ENCODE measurements at regions of chrX and their contacts with region 1.

Region 1: DNA sequence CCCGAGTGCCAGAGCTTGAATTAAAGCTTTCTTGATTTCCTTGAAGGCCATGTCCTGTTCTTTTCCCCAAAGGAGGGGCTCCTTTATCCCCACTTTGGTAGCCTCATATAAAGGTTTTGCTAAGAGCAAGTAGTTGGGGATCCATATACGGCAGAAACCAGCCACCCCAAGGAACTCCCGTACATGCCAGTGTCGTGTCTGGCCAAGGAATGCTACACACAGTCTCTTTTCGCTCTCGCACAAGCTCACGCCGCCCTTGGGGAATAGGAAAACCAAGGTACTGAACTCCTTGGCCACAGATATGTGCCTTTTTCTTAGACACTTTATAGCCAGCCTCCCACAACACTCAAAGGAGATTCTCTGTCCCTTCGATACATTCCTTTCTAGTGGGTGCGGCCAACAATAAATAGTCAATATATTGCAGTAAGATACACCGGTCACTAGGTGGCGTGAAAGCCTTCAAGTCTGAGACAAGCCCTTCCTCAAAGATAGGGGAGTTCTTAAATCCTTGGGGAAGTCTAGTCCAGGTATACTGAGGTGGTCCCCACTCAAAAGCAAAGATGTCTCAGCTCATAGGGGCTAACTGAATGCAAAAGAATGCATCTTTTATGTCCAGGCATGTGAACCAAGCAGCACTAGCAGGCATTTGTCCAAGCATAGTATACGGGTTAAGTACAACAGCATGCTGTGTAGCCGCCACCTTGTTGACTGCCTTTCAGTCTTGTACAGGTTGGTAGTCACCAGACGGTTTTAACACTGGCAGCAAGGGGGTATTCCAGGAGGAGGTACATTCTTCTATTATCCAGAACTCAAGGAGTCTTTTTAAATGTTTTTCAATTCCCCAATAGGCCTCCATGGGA is 57.8 kb upstream of the XAGE1B start:
- DNase-seq: peak in 5 of 9 experiments; percentile 0 to 57 (median 14)
- ATAC-seq: no peak
- H3K4me3 ChIP-seq: no peak overlapping the region
- H3K4me3 Mint-ChIP-seq: no peak overlapping the region
- H3K27ac ChIP-seq: no peak overlapping the region
- H3K27ac Mint-ChIP-seq: no peak overlapping the region
- H3K4me1 ChIP-seq: no peaks in the 10 kb centered on the region
- H3K4me1 Mint-ChIP-seq: peaks cover 2% of the 10 kb centered on the region
- H3K27me3 ChIP-seq: no peaks in the 10 kb centered on the region
- H3K27me3 Mint-ChIP-seq: no peaks in the 10 kb centered on the region
- CTCF ChIP-seq: peak; percentile 36

Region 2: DNA sequence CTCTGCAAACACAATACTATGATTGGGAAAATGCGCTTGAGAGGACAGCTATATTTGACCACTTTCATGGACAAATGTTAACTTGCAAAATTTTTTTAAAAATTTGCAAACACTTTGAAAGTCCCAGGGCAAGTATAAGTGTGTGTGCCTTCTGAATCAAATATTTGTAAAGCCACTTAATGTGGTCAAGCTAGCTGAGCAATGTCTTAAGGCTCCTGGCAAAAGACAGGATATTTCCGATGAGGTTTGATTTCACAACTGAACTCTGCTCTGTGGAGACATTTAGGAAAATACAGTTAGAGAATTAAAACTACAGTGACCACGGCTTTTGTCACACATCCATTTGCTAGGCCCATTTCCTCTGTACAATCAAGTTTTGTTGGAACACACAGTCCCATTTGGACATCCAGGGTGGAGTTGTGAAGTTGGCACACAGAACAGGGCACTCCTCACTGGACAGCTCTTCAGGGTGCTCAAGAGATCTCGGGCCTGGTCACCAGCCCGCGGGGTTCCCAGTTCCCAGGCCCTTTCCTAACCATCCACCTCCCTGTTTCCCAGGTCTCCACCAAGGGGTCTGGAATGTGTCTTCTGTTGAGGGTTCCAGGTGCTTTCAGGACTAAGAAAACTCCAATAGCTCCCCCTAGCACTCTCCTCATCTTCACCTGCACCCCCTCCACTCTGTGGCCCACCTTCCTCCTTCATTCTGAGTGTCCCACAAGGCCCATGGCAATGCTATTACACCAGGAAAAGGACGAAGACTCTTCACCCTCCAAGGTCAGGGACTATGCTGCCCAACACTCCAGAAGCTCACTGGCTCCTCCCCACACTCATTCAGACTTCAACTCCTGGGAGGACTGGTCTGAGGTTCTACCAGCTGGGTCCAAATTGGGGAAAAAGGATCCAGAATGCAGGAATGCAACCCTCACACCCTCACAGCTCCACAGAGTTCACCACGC is 163.9 kb before region 1 on chrX:
- CTCF ChIA-PET with region 1: no interaction called
- POLR2A ChIA-PET with region 1: no interaction called
- intact Hi-C with region 1: no loop called
- DNase-seq: no peak
- ATAC-seq: no peak
- H3K4me3 ChIP-seq: no peak overlapping the region
- H3K4me3 Mint-ChIP-seq: no peak overlapping the region
- H3K27ac ChIP-seq: no peak overlapping the region
- H3K27ac Mint-ChIP-seq: no peak overlapping the region
- H3K4me1 ChIP-seq: no peaks in the 10 kb centered on the region
- H3K4me1 Mint-ChIP-seq: no peaks in the 10 kb centered on the region
- H3K27me3 ChIP-seq: no peaks in the 10 kb centered on the region
- H3K27me3 Mint-ChIP-seq: no peaks in the 10 kb centered on the region
- CTCF ChIP-seq: no peak

Region 3: DNA sequence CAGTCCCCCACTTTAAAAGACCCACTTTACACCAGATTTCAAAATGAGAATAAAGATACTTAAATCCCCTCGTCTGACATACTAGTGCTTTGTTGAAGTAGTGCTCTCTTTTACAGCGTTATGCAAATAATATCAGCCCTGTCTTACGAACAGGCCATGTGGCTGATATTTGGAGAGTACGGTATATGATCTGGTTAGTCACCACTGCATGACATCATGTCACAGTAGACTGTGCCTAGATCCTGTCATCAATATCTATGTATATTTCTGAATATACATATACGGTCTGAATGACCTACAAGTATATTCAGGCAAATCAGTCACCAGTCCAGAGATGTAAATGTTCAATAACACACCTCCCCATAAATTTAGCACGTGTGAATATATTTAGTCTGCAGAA is 32.3 kb before region 1 on chrX:
- CTCF ChIA-PET with region 1: no interaction called
- POLR2A ChIA-PET with region 1: no interaction called
- intact Hi-C with region 1: no loop called
- DNase-seq: no peak
- ATAC-seq: no peak
- H3K4me3 ChIP-seq: no peak overlapping the region
- H3K4me3 Mint-ChIP-seq: no peak overlapping the region
- H3K27ac ChIP-seq: no peak overlapping the region
- H3K27ac Mint-ChIP-seq: no peak overlapping the region
- H3K4me1 ChIP-seq: no peaks in the 10 kb centered on the region
- H3K4me1 Mint-ChIP-seq: no peaks in the 10 kb centered on the region
- H3K27me3 ChIP-seq: no peaks in the 10 kb centered on the region
- H3K27me3 Mint-ChIP-seq: no peaks in the 10 kb centered on the region
- CTCF ChIP-seq: no peak

Region 4: DNA sequence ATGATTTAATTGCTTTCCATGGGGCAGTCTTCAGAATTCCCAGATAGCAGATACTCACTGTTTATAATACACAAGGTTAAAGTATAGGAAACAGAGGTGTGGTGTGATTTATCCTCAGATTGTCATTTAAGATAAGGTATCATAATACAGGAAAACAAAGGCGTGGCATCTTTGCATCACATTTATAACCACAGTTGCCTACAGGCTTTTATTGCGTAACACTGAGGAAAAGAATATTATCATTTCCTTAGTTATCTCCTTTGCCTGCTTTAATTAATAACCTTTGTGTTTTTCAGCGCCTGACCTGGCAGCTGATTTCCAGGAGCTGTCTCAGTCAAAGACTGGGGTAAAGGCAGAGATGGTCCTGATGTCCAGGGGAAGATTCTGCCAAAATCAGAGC is 11.2 kb after region 1 on chrX:
- CTCF ChIA-PET with region 1: no interaction called
- POLR2A ChIA-PET with region 1: no interaction called
- intact Hi-C with region 1: no loop called
- DNase-seq: no peak
- ATAC-seq: no peak
- H3K4me3 ChIP-seq: no peak overlapping the region
- H3K4me3 Mint-ChIP-seq: no peak overlapping the region
- H3K27ac ChIP-seq: no peak overlapping the region
- H3K27ac Mint-ChIP-seq: no peak overlapping the region
- H3K4me1 ChIP-seq: no peaks in the 10 kb centered on the region
- H3K4me1 Mint-ChIP-seq: no peaks in the 10 kb centered on the region
- H3K27me3 ChIP-seq: no peaks in the 10 kb centered on the region
- H3K27me3 Mint-ChIP-seq: no peaks in the 10 kb centered on the region
- CTCF ChIP-seq: no peak

Region 5: GRCh38 chrX:52995135-52996020 is 420.7 kb after region 1 on chrX:
- CTCF ChIA-PET with region 1: interaction called, 6 read pairs
- POLR2A ChIA-PET with region 1: no interaction called
- intact Hi-C with region 1: loop called in 1 of 2 experiments (anchors 5 kb)
- DNase-seq: peak; percentile 80 to 95 (median 88)
- ATAC-seq: peak; percentile 95
- H3K4me3 ChIP-seq: peak overlapping the region; percentile 72 to 83
- H3K4me3 Mint-ChIP-seq: peak overlapping the region; percentile 98
- H3K27ac ChIP-seq: peak overlapping the region; percentile 97 to 98
- H3K27ac Mint-ChIP-seq: peak overlapping the region; percentile 100
- H3K4me1 ChIP-seq: peaks cover 17% of the 10 kb centered on the region
- H3K4me1 Mint-ChIP-seq: peaks cover 26% of the 10 kb centered on the region
- H3K27me3 ChIP-seq: no peaks in the 10 kb centered on the region
- H3K27me3 Mint-ChIP-seq: no peaks in the 10 kb centered on the region
- CTCF ChIP-seq: peak; percentile 56